GM13976 (cell line): ENCODE measurements at regions of chr10 and their contacts with region 1.

Region 1: DNA sequence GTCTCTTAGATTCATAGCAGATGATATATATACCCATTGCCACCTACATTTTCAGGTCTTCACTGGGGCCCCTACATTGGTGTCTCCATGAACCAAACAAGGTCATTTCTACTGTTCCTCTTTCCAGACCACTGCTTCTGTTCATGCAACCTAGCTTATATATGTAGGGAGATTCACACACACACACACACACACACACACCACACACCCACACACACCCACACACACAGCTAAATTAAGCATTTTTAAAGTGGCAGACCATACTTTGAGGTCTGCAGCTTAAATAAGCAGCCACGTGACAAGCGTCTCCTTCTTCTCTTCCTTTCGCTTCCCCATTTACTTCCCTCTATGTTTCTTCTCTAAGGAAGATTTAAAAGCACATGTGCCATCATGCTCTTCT is 70.0 kb upstream of the CC2D2B start:
- DNase-seq: no peak
- CTCF ChIP-seq: no peak

Region 2: GRCh38 chr10:95697429-95697828 is 140.4 kb before region 1 on chr10:
- in situ Hi-C with region 1: loop called (anchors 5 kb)
- DNase-seq: no peak
- CTCF ChIP-seq: no peak